Activated CD4-positive, alpha-beta T cell treated with anti-CD3 and anti-CD28 coated beads, Interleukin-2, amount 10 ng/mL, durations not matched to agents 24 days and 14 days (primary cell): ENCODE measurements at regions of chr7 and their contacts with region 1.

Region 1: GRCh38 chr7:139359366-139360209 is at the start of gene LUC7L2:
- DNase-seq: peak; percentile 100
- H3K4me3 Mint-ChIP-seq: peak within 1 kb of the TSS; percentile 97
- H3K27ac Mint-ChIP-seq: peak within 1 kb of the TSS; percentile 100
- H3K4me1 Mint-ChIP-seq: peaks cover 28% of the 10 kb centered on the region
- H3K27me3 Mint-ChIP-seq: no peaks in the 10 kb centered on the region
- total RNA-seq, gene LUC7L2: 164 and 172 TPM in 2 replicates

Region 2: GRCh38 chr7:138809346-138809745 is 550.2 kb before region 1 on chr7:
- intact Hi-C with region 1: no loop called
- DNase-seq: no peak
- H3K4me3 Mint-ChIP-seq: no peak overlapping the region
- H3K27ac Mint-ChIP-seq: no peak overlapping the region
- H3K4me1 Mint-ChIP-seq: peaks cover 9% of the 10 kb centered on the region
- H3K27me3 Mint-ChIP-seq: peaks cover 4% of the 10 kb centered on the region

Region 3: DNA sequence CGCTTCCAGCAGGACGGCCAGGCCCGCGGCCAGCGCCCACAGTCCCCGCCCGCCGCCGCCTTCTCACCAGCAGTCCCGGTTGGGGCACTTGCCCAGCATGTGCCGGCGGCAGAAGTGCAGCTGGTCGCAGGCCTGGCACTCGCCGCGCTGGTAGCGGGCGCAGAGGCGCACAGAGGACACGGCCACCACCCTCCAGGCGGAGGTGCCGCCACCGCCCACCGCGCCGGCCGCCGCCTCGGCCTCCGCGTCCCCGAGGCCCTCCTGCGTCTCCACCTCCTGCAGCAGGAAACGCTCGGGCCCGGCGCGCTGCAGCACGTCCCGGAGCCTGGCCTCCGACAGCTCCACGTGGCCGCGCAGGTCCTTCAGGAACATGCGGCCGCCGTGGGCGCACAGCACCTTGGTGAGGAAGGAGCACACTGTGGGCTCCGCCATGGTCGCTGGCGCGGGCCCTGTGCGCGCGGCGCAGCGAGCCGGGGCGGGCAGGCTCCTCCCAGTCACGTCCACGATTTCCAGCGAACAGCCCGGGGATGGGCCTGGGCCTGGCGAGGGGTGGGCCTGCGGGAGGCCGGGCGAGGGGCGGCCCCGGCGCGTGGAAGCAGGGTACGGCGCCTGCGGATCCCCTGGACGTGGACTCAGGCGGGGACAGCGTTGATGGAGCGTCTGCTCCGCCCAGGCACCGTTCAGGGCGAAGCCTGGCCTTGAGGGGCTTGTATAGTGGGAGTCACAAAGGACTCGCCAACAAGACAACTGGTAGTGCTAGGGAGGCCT is 323.8 kb before region 1 on chr7 and contains the start of gene ZC3HAV1L:
- intact Hi-C with region 1: loop called (anchors 5 kb)
- DNase-seq: peak; percentile 90
- H3K4me3 Mint-ChIP-seq: peak within 1 kb of the TSS; percentile 89
- H3K27ac Mint-ChIP-seq: peak within 1 kb of the TSS; percentile 90
- H3K4me1 Mint-ChIP-seq: peaks cover 39% of the 10 kb centered on the region
- H3K27me3 Mint-ChIP-seq: peaks cover 3% of the 10 kb centered on the region
- total RNA-seq, gene ZC3HAV1L: 36.5 and 38.5 TPM in 2 replicates

Region 4: GRCh38 chr7:139230774-139231512 is 128.6 kb before region 1 on chr7 and contains the start of gene UBN2:
- intact Hi-C with region 1: loop called (anchors 5 kb)
- DNase-seq: peak; percentile 97
- H3K4me3 Mint-ChIP-seq: peak within 1 kb of the TSS; percentile 98
- H3K27ac Mint-ChIP-seq: peak within 1 kb of the TSS; percentile 97
- H3K4me1 Mint-ChIP-seq: peaks cover 20% of the 10 kb centered on the region
- H3K27me3 Mint-ChIP-seq: peaks cover 21% of the 10 kb centered on the region
- total RNA-seq, gene UBN2: 12.5 and 15.2 TPM in 2 replicates

Region 5: GRCh38 chr7:139543801-139544603 is 184.4 kb after region 1 on chr7:
- intact Hi-C with region 1: no loop called
- DNase-seq: no peak
- H3K4me3 Mint-ChIP-seq: no peak overlapping the region
- H3K27ac Mint-ChIP-seq: no peak overlapping the region
- H3K4me1 Mint-ChIP-seq: no peaks in the 10 kb centered on the region
- H3K27me3 Mint-ChIP-seq: no peaks in the 10 kb centered on the region

Region 6: GRCh38 chr7:139680676-139681462 is 321.3 kb after region 1 on chr7:
- intact Hi-C with region 1: loop called (anchors 1 kb)
- DNase-seq: peak; percentile 88
- H3K4me3 Mint-ChIP-seq: peak overlapping the region; percentile 67
- H3K27ac Mint-ChIP-seq: peak overlapping the region; percentile 91
- H3K4me1 Mint-ChIP-seq: peaks cover 48% of the 10 kb centered on the region
- H3K27me3 Mint-ChIP-seq: no peaks in the 10 kb centered on the region